SK-MEL-5 (cell line): ENCODE measurements at regions of chr9 and their contacts with region 1.

Region 1: GRCh38 chr9:136944519-136945279 is at the starts of genes C8G and FBXW5:
- DNase-seq: peak; percentile 93
- total RNA-seq, gene C8G: 0.45 and 0.53 TPM in 2 replicates
- total RNA-seq, gene FBXW5: 141 and 174 TPM in 2 replicates

Region 2: GRCh38 chr9:136807281-136808074 is 137.2 kb before region 1 on chr9 and contains the start of gene RABL6:
- in situ Hi-C with region 1: loop called (anchors 25 kb)
- DNase-seq: peak; percentile 64
- total RNA-seq, gene RABL6: 57.4 and 62.6 TPM in 2 replicates

Region 3: GRCh38 chr9:137034863-137035761 is 90.4 kb after region 1 on chr9:
- in situ Hi-C with region 1: loop called (anchors 25 kb)
- DNase-seq: peak; percentile 84